ENCODE measurements at regions of chr12 and their contacts with region 1.

Region 1: DNA sequence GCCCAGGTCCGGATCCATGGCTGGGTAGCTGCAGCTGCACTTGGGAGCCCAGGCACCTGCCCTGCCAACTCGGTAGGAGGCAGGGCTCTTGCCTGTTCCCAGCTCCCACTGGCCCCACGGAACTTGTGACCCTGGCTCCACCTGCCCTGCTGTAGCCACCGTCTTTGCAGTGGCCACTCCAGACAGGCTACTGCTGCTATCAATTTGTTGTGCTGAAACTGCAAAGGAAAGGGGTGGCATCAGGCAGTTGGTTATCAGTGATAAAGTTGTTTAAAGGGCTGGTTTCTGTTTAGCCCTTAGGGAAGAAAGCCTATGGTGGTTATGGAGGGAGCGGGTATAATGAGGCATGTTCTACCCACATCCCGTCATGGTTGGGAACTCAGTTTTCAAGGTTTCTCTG is 32.1 kb upstream of the ARID2 start:
- DNase-seq: no peak
- H3K4me3 ChIP-seq: no peak overlapping the region
- H3K27ac ChIP-seq: no peak overlapping the region
- H3K4me1 ChIP-seq: no peaks in the 10 kb centered on the region
- H3K27me3 ChIP-seq: no peaks in the 10 kb centered on the region
- CTCF ChIP-seq: no peak

Region 2: GRCh38 chr12:45060976-45061375 is 636.4 kb before region 1 on chr12:
- CTCF ChIA-PET with region 1: no interaction called
- POLR2A ChIA-PET with region 1: interaction called, 10 read pairs
- intact Hi-C with region 1: no loop called
- DNase-seq: no peak
- H3K4me3 ChIP-seq: no peak overlapping the region
- H3K27ac ChIP-seq: no peak overlapping the region
- H3K4me1 ChIP-seq: no peaks in the 10 kb centered on the region
- H3K27me3 ChIP-seq: peaks cover 33% of the 10 kb centered on the region
- CTCF ChIP-seq: no peak

Region 3: DNA sequence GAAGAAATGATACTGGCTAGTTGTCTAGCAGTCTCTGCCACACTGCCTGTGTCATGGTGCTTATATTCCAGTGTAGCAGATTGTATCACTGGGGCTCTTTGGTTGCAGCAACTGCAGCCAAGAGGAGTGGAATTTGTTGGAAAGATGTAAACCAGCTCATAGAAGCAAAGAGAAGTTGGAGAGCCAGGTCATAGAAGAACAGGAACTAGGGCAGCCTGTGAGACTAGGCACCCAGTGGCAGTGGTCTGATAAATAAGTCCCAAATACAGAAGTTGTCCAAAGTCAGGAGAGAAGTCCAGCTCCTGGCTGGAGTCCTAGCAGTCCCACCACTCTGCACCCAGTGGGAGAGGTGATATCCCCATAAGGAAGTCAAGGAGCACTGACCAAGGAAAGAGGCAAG is 140.4 kb before region 1 on chr12:
- CTCF ChIA-PET with region 1: no interaction called
- POLR2A ChIA-PET with region 1: no interaction called
- intact Hi-C with region 1: no loop called
- DNase-seq: no peak
- H3K4me3 ChIP-seq: no peak overlapping the region
- H3K27ac ChIP-seq: no peak overlapping the region
- H3K4me1 ChIP-seq: no peaks in the 10 kb centered on the region
- H3K27me3 ChIP-seq: no peaks in the 10 kb centered on the region
- CTCF ChIP-seq: no peak

Region 4: GRCh38 chr12:46005151-46005797 is 307.9 kb after region 1 on chr12:
- CTCF ChIA-PET with region 1: no interaction called
- POLR2A ChIA-PET with region 1: no interaction called
- intact Hi-C with region 1: no loop called
- DNase-seq: no peak
- H3K4me3 ChIP-seq: no peak overlapping the region
- H3K27ac ChIP-seq: no peak overlapping the region
- H3K4me1 ChIP-seq: no peaks in the 10 kb centered on the region
- H3K27me3 ChIP-seq: no peaks in the 10 kb centered on the region
- CTCF ChIP-seq: peak; percentile 73

Measured in PC-9 (cell line).